ENCODE measurements at regions of chrX and their contacts with region 1.

Region 1: GRCh38 chrX:150365051-150365989 is 2.2 kb downstream of the MAMLD1 start:
- DNase-seq: peak in 41 of 42 donors; percentile 48 to 92 (median 86)

Region 2: DNA sequence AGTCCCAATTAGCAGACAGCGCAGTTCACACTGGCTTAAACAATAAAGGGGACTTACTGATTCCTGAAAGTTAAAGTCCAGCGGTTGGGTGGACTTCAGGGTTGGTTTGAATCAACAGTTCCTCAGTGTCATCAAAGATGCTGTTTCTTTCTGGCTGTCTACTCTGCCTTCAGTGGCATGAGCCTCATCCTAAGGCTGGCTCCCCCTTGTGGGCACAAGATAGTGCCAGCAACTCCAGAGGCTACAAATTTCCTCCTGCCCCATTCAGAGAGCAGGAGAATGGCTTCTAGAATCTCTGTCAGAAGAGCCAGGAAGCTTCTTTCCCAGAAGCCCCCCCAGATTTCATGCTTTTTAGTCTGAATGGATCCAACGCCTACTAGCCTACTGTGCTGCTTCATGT is 120.7 kb after region 1 on chrX:
- intact Hi-C with region 1: loop called (anchors 10 kb)
- DNase-seq: peak in 41 of 42 donors; percentile 50 to 89 (median 74)

Region 3: DNA sequence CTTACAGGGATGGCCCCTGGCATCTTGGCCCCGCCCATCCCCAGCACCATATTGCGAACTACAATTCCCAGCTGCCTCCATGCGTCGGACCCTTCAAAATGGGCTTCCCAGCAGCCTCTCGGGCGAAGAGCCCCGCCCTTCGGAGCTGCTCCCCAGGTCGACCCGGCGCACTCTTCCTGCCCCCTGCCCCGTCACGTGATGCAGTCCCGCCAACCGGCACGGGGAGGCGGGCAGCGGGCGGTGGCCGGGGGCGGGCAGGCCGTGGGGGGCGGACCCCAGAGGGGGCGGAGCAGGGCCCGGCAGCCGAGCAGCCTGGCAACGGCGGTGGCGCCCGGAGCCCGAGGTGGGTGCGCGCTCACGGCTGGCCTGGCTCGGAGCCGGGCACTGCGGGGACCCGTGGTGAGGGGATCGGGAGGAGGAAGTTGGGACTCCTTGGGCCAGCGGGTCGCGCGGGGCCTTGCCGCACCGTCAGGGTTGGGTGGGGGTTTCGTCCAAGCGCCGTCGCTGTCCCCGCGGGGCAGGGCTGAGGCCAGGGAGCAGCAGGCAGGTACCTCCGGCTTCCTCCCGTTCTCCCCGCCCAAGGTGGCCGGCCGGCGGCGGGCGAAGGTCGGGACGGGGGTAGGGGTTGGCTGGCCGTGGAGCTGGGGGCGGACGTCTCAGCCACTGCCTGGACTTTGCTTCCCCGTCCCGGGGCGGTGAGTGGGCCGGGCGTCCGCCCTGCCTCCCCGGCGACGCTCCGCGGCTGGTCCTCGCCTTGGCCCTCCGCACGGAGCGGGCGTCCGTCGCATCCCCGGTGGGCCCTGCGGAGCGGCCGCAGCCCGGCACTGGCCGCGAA is 203.2 kb after region 1 on chrX and contains the start of gene MTM1:
- intact Hi-C with region 1: loop called (anchors 10 kb)
- DNase-seq: peak; percentile 85 to 98 (median 94)